PC-9 (cell line): ENCODE measurements at regions of chr4 and their contacts with region 1.

Region 1: DNA sequence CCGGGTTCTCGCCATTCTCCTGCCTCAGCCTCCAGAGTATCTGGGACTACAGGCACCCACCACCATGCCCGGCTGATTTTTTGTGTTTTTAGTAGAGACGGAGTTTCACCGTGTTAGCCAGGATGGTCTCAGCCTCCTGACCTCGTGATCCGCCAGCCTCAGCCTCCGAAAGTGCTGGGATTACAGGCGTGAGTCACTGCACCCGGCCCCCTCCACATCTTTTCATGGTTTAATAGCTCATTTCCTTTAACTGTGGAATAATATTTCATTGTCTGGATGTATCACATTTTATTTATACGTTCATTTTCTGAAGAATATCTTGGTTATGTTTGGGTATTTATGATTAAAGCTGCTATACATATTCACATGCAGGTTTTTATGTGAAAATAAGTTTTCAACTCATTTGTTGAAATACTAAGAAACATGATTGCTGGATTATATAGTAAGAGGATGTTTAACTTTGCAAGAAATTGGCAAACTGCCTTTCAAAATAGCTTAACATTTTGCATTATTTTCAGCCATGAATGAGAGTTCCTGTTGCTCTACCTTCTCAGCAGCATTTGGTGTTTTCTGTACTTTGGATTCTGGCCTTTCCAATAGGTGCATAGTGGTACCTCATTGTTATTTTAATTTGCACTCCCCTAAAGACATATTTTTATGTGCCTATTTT is 591.9 kb downstream of the TECRL start:
- DNase-seq: no peak
- H3K4me3 ChIP-seq: no peak overlapping the region
- H3K27ac ChIP-seq: no peak overlapping the region
- H3K4me1 ChIP-seq: no peaks in the 10 kb centered on the region
- H3K27me3 ChIP-seq: no peaks in the 10 kb centered on the region
- CTCF ChIP-seq: no peak

Region 2: GRCh38 chr4:64617800-64618199 is 800.5 kb after region 1 on chr4:
- CTCF ChIA-PET with region 1: no interaction called
- POLR2A ChIA-PET with region 1: interaction called, 19 read pairs
- intact Hi-C with region 1: no loop called
- DNase-seq: peak in 1 of 2 experiments; percentile 34
- H3K4me3 ChIP-seq: no peak overlapping the region
- H3K27ac ChIP-seq: no peak overlapping the region
- H3K4me1 ChIP-seq: no peaks in the 10 kb centered on the region
- H3K27me3 ChIP-seq: no peaks in the 10 kb centered on the region
- CTCF ChIP-seq: peak; percentile 33; the same call in 1 of the 2 replicates